Sigmoid colon (tissue), 7 donors: ENCODE measurements at regions of chr16 and their contacts with region 1.

Region 1: GRCh38 chr16:89422905-89423630 is 67.3 kb downstream of the ANKRD11 start:
- DNase-seq: no peak
- H3K4me3 ChIP-seq: no peak overlapping the region
- H3K27ac ChIP-seq: peak overlapping the region in 3 of 4 donors; percentile 10 to 66 (median 58)
- H3K4me1 ChIP-seq: peaks cover 0 to 53% (median 32%) of the 10 kb centered on the region in 4 donors
- H3K27me3 ChIP-seq: no peaks in the 10 kb centered on the region
- CTCF ChIP-seq: no peak
- EP300 ChIP-seq: no peak
- POLR2A ChIP-seq: no peak

Region 2: DNA sequence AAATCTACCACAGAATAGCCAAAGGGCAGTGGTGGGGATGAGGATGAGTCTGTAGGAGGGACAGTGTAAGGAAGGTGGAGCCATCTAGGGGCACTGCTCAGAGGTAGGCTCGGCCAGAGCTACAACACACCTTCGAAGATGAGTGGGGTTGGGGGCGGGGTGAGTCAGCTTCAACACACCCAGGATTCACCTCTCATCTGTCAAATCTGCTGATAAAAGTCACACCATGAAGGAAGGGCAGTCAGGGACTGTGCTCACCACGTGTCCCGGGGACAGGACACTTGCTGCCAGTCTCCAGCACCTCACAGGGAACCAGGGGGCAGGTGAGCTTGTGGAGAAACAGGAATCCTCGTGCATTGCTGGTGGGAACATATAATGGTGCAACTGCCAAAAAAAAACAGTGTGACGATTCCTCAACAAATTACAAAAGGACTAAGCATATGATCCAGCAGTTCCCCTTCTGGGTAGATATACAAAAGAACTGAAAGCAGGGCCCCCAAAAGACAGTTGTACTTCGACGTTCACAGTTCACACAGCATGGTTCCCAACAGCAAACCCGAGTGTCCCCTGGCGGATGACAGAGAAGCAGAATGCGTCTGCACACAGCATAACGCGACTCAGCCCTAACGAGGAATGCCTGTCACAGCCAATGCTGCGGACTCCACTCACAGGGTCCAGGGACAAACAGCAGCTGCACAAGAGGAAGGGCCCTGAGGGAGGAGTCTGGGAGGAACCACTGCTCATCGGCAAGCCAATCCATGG is 65.8 kb before region 1 on chr16:
- intact Hi-C with region 1: no loop called
- DNase-seq: no peak
- H3K4me3 ChIP-seq: no peak overlapping the region
- H3K27ac ChIP-seq: peak overlapping the region in 2 of 4 donors; percentile 18 to 19
- H3K4me1 ChIP-seq: peaks cover 0 to 84% (median 78%) of the 10 kb centered on the region in 4 donors
- H3K27me3 ChIP-seq: no peaks in the 10 kb centered on the region
- CTCF ChIP-seq: no peak
- EP300 ChIP-seq: no peak
- POLR2A ChIP-seq: no peak

Region 3: GRCh38 chr16:89458551-89458950 is 35.5 kb after region 1 on chr16:
- intact Hi-C with region 1: loop called (anchors 5 kb)
- DNase-seq: no peak
- H3K4me3 ChIP-seq: no peak overlapping the region
- H3K27ac ChIP-seq: no peak overlapping the region
- H3K4me1 ChIP-seq: peaks cover 0 to 38% (median 16%) of the 10 kb centered on the region in 4 donors
- H3K27me3 ChIP-seq: no peaks in the 10 kb centered on the region
- CTCF ChIP-seq: no peak
- EP300 ChIP-seq: no peak
- POLR2A ChIP-seq: no peak